ENCODE measurements at regions of chr4 and their contacts with region 1.

Region 1: GRCh38 chr4:57640391-57641100 is 530.4 kb upstream of the IGFBP7 start:
- DNase-seq: no peak
- ATAC-seq: no peak
- H3K4me3 ChIP-seq: no peak overlapping the region
- H3K27ac ChIP-seq: no peak overlapping the region
- H3K4me1 ChIP-seq: no peaks in the 10 kb centered on the region
- H3K27me3 ChIP-seq: no peaks in the 10 kb centered on the region
- CTCF ChIP-seq: no peak
- EP300 ChIP-seq: no peak
- POLR2A ChIP-seq: no peak
- RAD21 ChIP-seq: no peak

Region 2: GRCh38 chr4:57612279-57612678 is 28.3 kb before region 1 on chr4:
- CTCF ChIA-PET with region 1: no interaction called
- POLR2A ChIA-PET with region 1: no interaction called
- in situ Hi-C with region 1: no loop called
- intact Hi-C with region 1: loop called (anchors 1 kb)
- DNase-seq: no peak
- ATAC-seq: peak; percentile 49; the same call in 2 of the 3 replicates
- H3K4me3 ChIP-seq: no peak overlapping the region
- H3K27ac ChIP-seq: no peak overlapping the region
- H3K4me1 ChIP-seq: no peaks in the 10 kb centered on the region
- H3K27me3 ChIP-seq: no peaks in the 10 kb centered on the region
- CTCF ChIP-seq: no peak
- EP300 ChIP-seq: no peak
- POLR2A ChIP-seq: no peak
- RAD21 ChIP-seq: no peak